Mammary epithelial cell (primary cell): ENCODE measurements at regions of chr12 and their contacts with region 1.

Region 1: DNA sequence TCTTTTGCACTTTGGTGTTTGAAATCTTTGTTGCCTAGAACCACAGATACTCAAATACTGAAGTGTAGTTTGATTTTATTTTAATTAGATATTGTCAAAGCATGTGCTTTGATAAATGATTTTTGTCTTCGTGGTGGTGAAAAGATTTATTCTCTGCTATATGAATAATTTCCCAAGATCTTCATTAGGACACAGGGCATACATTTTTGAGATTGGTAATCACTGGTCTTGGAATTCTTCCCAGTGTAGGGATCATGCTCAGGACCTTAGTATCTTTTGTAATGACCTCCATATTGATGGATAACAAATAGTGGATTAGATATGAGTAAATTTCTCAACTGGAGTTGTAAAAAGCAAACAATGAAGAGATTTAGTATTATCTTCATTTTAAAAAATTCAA is 28.2 kb downstream of the TBK1 start:
- DNase-seq: no peak
- H3K4me3 ChIP-seq: no peak overlapping the region
- H3K27ac ChIP-seq: no peak overlapping the region
- H3K4me1 ChIP-seq: no peaks in the 10 kb centered on the region
- H3K27me3 ChIP-seq: no peaks in the 10 kb centered on the region
- CTCF ChIP-seq: no peak

Region 2: DNA sequence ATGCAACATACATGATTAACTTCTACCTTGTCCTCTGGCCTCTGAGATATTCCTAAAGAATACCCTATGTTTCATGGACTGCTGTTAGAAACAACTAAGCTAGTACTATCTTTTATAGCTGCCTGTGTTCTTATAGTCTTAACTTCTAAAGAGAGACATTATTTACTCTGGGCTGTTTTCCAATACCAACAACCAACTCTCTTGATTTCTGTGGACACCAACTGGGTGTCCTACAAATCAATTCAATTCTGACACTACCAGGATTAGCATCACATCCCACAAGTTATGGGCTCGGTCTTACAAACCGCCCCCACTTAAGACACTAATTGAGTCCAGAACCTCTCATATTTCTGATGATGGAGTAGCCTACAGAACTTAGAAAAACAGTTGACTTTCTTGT is 67.7 kb before region 1 on chr12:
- CTCF ChIA-PET with region 1: no interaction called
- dilution Hi-C with region 1: no loop called
- in situ Hi-C with region 1: loop called in 1 of 2 experiments (anchors 10 kb)
- intact Hi-C with region 1: no loop called
- DNase-seq: no peak
- H3K4me3 ChIP-seq: no peak overlapping the region
- H3K27ac ChIP-seq: no peak overlapping the region
- H3K4me1 ChIP-seq: no peaks in the 10 kb centered on the region
- H3K27me3 ChIP-seq: no peaks in the 10 kb centered on the region
- CTCF ChIP-seq: no peak